ENCODE measurements at regions of chr2 and their contacts with region 1.

Region 1: GRCh38 chr2:11446733-11447248 is 19.2 kb downstream of the E2F6 start:
- DNase-seq: peak; percentile 50 to 59 (median 56)
- H3K4me3 ChIP-seq: no peak overlapping the region
- H3K4me3 Mint-ChIP-seq: no peak overlapping the region
- H3K27ac ChIP-seq: no peak overlapping the region
- H3K27ac Mint-ChIP-seq: no peak overlapping the region
- H3K4me1 ChIP-seq: no peaks in the 10 kb centered on the region
- H3K4me1 Mint-ChIP-seq: no peaks in the 10 kb centered on the region
- H3K27me3 ChIP-seq: no peaks in the 10 kb centered on the region
- H3K27me3 Mint-ChIP-seq: no peaks in the 10 kb centered on the region

Region 2: GRCh38 chr2:11234309-11234708 is 212.5 kb before region 1 on chr2:
- CTCF ChIA-PET with region 1: interaction called, 16 read pairs
- POLR2A ChIA-PET with region 1: no interaction called
- intact Hi-C with region 1: loop called (anchors 1 kb)
- DNase-seq: peak in 3 of 5 donors; percentile 0 to 2 (median 2)
- H3K4me3 ChIP-seq: no peak overlapping the region
- H3K4me3 Mint-ChIP-seq: no peak overlapping the region
- H3K27ac ChIP-seq: no peak overlapping the region
- H3K27ac Mint-ChIP-seq: no peak overlapping the region
- H3K4me1 ChIP-seq: no peaks in the 10 kb centered on the region
- H3K4me1 Mint-ChIP-seq: peaks cover 0 to 6% (median 5%) of the 10 kb centered on the region in 4 donors
- H3K27me3 ChIP-seq: no peaks in the 10 kb centered on the region
- H3K27me3 Mint-ChIP-seq: no peaks in the 10 kb centered on the region